Motor neuron (in vitro differentiated cells): ENCODE measurements at regions of chr1 and their contacts with region 1.

Region 1: GRCh38 chr1:162035241-162035640 is 11.6 kb upstream of the OLFML2B start:
- ATAC-seq: no peak
- H3K4me3 ChIP-seq: no peak overlapping the region
- H3K27ac ChIP-seq: no peak overlapping the region
- H3K4me1 ChIP-seq: peaks cover 0 to 11% of the 10 kb centered on the region in 2 donors

Region 2: DNA sequence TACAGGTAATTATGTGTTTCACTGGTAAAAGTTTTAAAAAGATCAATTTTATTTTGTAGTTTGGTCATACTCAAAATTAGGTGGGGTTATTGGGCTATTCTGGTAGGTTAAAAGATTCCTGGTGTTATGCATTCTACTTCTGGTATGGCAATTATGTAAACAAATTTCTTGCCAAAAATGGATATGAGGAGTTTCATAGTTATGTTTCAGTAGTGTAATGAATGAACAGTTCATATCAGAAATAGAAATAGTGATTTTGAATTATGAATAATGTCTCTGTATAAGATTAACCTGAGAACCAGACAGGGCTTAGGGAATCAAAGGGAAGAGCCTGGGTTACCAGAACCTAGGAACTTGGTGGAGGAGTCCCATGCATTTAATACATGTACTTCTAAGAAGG is 253.2 kb before region 1 on chr1:
- in situ Hi-C with region 1: loop called in 5 of 9 experiments (anchors 10 to 25 kb)
- ATAC-seq: peak in 2 of 8 experiments; percentile 61 to 70
- H3K4me3 ChIP-seq: no peak overlapping the region
- H3K27ac ChIP-seq: no peak overlapping the region
- H3K4me1 ChIP-seq: no peaks in the 10 kb centered on the region